ENCODE measurements at regions of chr13 and their contacts with region 1.

Region 1: GRCh38 chr13:28138012-28138755 is at the start of gene PAN3:
- DNase-seq: peak; percentile 56
- ATAC-seq: peak; percentile 67
- H3K4me3 ChIP-seq: peak within 1 kb of the TSS; percentile 93
- H3K27ac ChIP-seq: peak within 1 kb of the TSS; percentile 96
- H3K4me1 ChIP-seq: peaks cover 8% of the 10 kb centered on the region
- H3K27me3 ChIP-seq: no peaks in the 10 kb centered on the region
- CTCF ChIP-seq: peak in 2 of 3 experiments; percentile 14 to 32; a peak in 2 of 6 replicates
- EP300 ChIP-seq: no peak
- POLR2A ChIP-seq: peak; percentile 84
- RAD21 ChIP-seq: peak; percentile 29; the same call in 1 of the 2 replicates
- polyA plus RNA-seq, gene PAN3: 13.0 to 19.4 TPM

Region 2: GRCh38 chr13:27533155-27533643 is 605.0 kb before region 1 on chr13:
- CTCF ChIA-PET with region 1: no interaction called
- POLR2A ChIA-PET with region 1: no interaction called
- RAD21 ChIA-PET with region 1: no interaction called
- SMC1A ChIA-PET with region 1: no interaction called
- in situ Hi-C with region 1: no loop called
- intact Hi-C with region 1: no loop called
- DNase-seq: no peak
- ATAC-seq: peak; percentile 92
- H3K4me3 ChIP-seq: no peak overlapping the region
- H3K27ac ChIP-seq: no peak overlapping the region
- H3K4me1 ChIP-seq: no peaks in the 10 kb centered on the region
- H3K27me3 ChIP-seq: no peaks in the 10 kb centered on the region
- CTCF ChIP-seq: peak; percentile 69 to 87 (median 79)
- EP300 ChIP-seq: no peak
- POLR2A ChIP-seq: no peak
- RAD21 ChIP-seq: peak; percentile 58

Region 3: DNA sequence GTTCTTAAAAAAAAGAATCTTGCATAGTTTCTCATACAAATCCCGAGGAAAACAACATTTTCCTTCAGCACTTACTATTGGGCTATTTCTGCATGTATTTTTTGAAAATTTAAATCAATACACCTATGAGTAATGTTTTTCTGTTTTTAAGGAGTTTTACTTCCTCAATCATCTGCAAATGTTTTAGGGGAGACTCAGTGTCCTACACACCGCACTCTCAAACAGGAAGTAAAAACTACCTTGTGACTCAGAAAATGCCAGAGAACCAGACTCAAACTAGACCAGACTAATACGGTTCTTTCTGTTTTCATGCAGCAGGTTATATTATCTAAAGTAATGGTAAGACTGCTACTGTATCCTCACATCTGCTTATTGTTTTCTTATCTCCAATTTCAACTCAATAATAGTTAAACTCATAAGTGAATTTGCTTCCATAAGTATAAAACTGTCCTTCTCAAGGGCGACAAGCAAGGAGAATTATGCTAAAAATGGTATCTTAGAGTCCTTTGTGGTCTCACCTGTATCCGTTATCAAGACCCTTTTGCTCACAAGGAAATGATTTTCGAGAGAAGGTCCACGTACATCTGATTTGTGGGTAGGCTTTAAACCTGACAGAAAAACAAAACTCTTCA is 90.3 kb before region 1 on chr13:
- CTCF ChIA-PET with region 1: no interaction called
- POLR2A ChIA-PET with region 1: no interaction called
- RAD21 ChIA-PET with region 1: interaction called, 4 read pairs
- SMC1A ChIA-PET with region 1: interaction called, 3 read pairs
- in situ Hi-C with region 1: no loop called
- intact Hi-C with region 1: loop called (anchors 2 kb)
- DNase-seq: peak; percentile 94
- ATAC-seq: peak; percentile 87
- H3K4me3 ChIP-seq: peak overlapping the region; percentile 57; the same call in 1 of the 2 replicates
- H3K27ac ChIP-seq: peak overlapping the region; percentile 88
- H3K4me1 ChIP-seq: peaks cover 44% of the 10 kb centered on the region
- H3K27me3 ChIP-seq: no peaks in the 10 kb centered on the region
- CTCF ChIP-seq: no peak
- EP300 ChIP-seq: peak; percentile 5 to 80; a peak in 3 of 4 replicates
- POLR2A ChIP-seq: no peak
- RAD21 ChIP-seq: no peak

Region 4: DNA sequence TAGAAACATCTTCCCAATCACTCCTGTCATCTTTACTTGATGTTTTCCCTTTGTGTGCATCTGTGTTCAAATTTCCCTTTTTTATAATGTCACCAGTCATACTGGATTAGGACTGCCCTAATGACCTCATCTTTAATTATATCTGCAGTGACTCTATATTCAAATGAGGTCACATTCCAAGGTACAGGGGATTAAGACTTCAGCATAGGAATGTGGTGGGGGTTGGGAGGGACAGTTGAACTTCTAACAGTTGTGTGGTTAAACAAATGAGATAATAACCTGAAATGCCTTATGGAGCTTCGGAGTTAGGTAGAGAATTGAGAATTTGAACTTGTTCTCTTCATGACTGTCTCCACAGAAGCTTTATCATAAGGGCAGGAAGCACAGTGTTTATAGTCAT is 23.2 kb after region 1 on chr13:
- CTCF ChIA-PET with region 1: interaction called, 3 read pairs
- POLR2A ChIA-PET with region 1: interaction called, 6 read pairs
- RAD21 ChIA-PET with region 1: no interaction called
- SMC1A ChIA-PET with region 1: interaction called, 11 read pairs
- in situ Hi-C with region 1: no loop called
- intact Hi-C with region 1: no loop called
- DNase-seq: no peak
- ATAC-seq: no peak; the same call in 2 of the 3 replicates
- H3K4me3 ChIP-seq: no peak overlapping the region
- H3K27ac ChIP-seq: no peak overlapping the region
- H3K4me1 ChIP-seq: 0 out of 2 replicates have a peak, but pooled peaks cover 3% of the 10 kb centered on the region
- H3K27me3 ChIP-seq: no peaks in the 10 kb centered on the region
- CTCF ChIP-seq: no peak
- EP300 ChIP-seq: no peak
- POLR2A ChIP-seq: no peak
- RAD21 ChIP-seq: no peak

Region 5: DNA sequence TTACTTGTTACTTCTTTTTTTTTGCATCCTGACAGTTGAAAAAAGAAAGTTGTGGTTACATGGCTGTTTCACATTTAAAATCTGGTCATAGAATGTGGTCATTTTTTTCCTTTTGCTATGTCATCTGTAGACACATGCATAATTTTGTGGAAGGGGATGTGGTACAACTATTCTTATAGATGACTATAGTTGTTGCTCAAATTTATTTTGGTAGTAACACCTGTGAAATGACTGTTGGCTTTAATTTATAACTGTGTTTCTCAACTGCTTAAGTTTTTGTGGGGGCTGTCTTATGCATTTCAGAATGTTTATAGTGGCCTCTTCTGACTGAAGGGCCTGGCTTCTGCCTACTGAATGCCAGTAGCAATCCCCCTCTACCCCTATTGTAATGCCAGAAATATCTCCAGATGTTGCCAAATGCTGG is 130.6 kb after region 1 on chr13:
- CTCF ChIA-PET with region 1: no interaction called
- POLR2A ChIA-PET with region 1: no interaction called
- RAD21 ChIA-PET with region 1: no interaction called
- SMC1A ChIA-PET with region 1: interaction called, 9 read pairs
- in situ Hi-C with region 1: no loop called
- intact Hi-C with region 1: loop called (anchors 2 kb)
- DNase-seq: peak; percentile 94
- ATAC-seq: peak; percentile 99
- H3K4me3 ChIP-seq: no peak overlapping the region
- H3K27ac ChIP-seq: peak overlapping the region; percentile 54
- H3K4me1 ChIP-seq: peaks cover 10% of the 10 kb centered on the region; the same call in 1 of the 2 replicates
- H3K27me3 ChIP-seq: no peaks in the 10 kb centered on the region
- CTCF ChIP-seq: no peak
- EP300 ChIP-seq: peak; percentile 96 to 100
- POLR2A ChIP-seq: no peak
- RAD21 ChIP-seq: peak; percentile 51

Region 6: GRCh38 chr13:28468023-28468915 is 330.1 kb after region 1 on chr13:
- CTCF ChIA-PET with region 1: no interaction called
- POLR2A ChIA-PET with region 1: no interaction called
- RAD21 ChIA-PET with region 1: no interaction called
- SMC1A ChIA-PET with region 1: no interaction called
- in situ Hi-C with region 1: no loop called
- intact Hi-C with region 1: no loop called
- DNase-seq: peak; percentile 20
- ATAC-seq: peak; percentile 36
- H3K4me3 ChIP-seq: no peak overlapping the region
- H3K27ac ChIP-seq: no peak overlapping the region
- H3K4me1 ChIP-seq: no peaks in the 10 kb centered on the region
- H3K27me3 ChIP-seq: no peaks in the 10 kb centered on the region
- CTCF ChIP-seq: no peak
- EP300 ChIP-seq: no peak
- POLR2A ChIP-seq: no peak
- RAD21 ChIP-seq: no peak

Region 7: DNA sequence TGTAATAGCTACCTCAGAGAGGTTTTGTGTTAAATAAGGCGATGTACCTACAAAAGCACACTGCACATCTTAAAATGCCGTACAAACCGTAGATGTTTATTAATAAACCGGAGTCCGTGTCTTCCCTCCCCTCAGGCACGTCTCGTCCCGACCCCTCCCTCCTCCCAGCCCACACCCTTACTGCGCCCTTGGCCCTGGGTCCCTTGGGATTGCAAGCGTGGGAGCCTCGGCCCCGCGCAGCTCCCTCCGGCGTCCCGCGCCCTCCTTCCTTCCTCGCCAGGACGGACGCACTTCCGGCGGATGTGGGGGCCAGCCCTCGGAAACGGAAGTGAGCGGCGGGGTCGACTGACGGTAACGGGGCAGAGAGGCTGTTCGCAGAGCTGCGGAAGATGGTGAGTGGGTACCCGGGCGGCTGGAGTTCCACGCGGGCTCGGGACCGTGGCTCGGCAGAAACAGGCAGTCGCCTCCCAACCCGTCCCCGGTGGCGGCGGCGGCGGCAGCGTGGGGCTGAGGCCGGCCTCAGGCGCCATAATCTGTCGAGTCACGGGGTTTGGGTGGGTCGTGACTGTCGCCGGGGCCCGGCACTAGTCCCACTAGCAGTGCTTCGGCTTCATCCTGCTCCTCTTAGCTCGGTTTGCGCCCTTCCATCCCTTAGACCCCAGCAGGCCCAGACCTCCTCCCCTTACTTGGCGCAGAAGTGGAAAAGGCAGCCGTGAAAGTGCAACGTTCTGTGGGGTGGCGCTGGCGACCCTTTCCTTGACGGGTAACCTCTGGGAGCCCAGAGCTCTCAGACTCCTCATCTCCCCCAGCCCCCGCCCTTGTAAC is 520.8 kb after region 1 on chr13 and contains the start of gene POMP:
- CTCF ChIA-PET with region 1: no interaction called
- POLR2A ChIA-PET with region 1: interaction called, 3 read pairs
- RAD21 ChIA-PET with region 1: no interaction called
- SMC1A ChIA-PET with region 1: interaction called, 3 read pairs
- in situ Hi-C with region 1: no loop called
- intact Hi-C with region 1: loop called (anchors 5 kb)
- DNase-seq: peak; percentile 82
- ATAC-seq: peak; percentile 85
- H3K4me3 ChIP-seq: peak within 1 kb of the TSS; percentile 80
- H3K27ac ChIP-seq: peak within 1 kb of the TSS; percentile 99
- H3K4me1 ChIP-seq: 0 out of 2 replicates have a peak, but pooled peaks cover 4% of the 10 kb centered on the region
- H3K27me3 ChIP-seq: no peaks in the 10 kb centered on the region
- CTCF ChIP-seq: no peak
- EP300 ChIP-seq: peak in 1 of 2 experiments; percentile 63; a peak in 2 of 4 replicates
- POLR2A ChIP-seq: peak; percentile 99
- RAD21 ChIP-seq: 0 out of 2 replicates have a peak, but pooled peaks have one; percentile 4
- polyA plus RNA-seq, gene POMP: 655 to 668 TPM

Measured in GM12878 (cell line).